ENCODE measurements at regions of chr9 and their contacts with region 1.

Region 1: DNA sequence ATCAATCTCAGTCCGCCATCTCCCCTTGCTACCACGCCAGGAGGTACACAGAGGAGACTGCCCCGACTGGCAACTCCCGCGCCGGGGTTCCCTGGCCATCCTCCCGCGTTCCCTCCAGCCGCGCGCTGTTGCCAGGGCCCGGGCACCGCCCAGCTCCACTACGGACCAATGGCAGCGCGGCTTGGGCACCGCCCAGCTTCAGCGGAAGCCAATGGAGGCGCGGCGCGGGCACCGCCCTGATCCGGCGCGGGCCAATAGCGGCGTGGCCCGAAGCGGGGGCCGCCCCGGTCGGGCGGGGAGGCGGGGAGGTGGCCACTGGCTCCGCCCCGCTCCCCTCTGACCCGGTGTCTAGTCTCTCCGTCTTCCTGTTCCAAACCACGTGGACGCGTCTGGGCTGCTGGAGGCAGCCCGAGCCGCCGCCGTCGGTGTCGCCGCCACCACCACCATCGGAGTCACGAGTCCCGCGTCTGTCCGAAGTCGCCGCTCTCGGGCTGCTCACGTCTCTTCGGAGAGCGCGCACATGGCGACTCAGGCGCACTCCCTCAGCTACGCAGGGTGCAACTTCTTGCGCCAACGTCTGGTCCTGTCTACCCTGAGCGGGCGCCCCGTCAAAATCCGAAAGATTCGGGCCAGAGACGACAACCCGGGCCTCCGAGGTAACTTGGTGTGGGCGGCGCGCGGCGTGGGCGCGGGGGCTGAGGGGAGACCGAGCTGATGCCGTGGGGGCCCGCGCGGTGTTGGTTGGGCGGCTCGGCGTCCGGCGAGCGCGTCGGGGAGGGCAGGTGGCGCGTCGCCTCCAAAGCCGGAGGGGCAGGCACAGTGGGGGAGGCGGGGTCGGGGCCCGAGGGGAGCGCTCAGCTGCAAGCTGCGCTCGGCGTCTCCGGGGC is at the start of gene RCL1:
- DNase-seq: peak; percentile 98
- H3K4me3 Mint-ChIP-seq: peak within 1 kb of the TSS; percentile 93
- H3K27ac Mint-ChIP-seq: peak within 1 kb of the TSS; percentile 86
- H3K4me1 Mint-ChIP-seq: peaks cover 49% of the 10 kb centered on the region
- H3K27me3 Mint-ChIP-seq: no peaks in the 10 kb centered on the region
- total RNA-seq, gene RCL1: 26.0 to 28.2 TPM

Region 2: DNA sequence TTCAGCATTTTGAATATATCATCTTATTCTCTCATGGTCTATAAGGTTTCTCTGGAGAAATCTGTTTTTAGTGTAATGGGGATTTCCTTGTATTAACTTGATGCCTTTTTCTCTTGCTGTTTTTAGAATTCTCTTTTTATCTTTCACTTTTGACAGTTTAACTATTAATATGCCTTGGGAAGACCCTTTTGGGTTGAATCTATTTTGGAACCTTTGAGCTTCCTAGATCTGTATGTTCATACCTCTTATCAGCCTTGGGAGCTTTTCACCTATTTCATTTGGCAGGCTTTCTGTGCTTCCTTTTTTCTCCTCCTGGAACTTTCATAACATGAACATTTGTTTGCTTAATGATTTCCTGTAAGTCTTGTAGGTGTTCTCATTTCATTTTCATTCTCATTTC is 22.1 kb after region 1 on chr9:
- CTCF ChIA-PET with region 1: interaction called, 6 read pairs
- POLR2A ChIA-PET with region 1: no interaction called
- intact Hi-C with region 1: loop called (anchors 2 kb)
- DNase-seq: no peak
- H3K4me3 Mint-ChIP-seq: peak overlapping the region; percentile 8
- H3K27ac Mint-ChIP-seq: peak overlapping the region; percentile 85
- H3K4me1 Mint-ChIP-seq: peaks cover 46% of the 10 kb centered on the region
- H3K27me3 Mint-ChIP-seq: no peaks in the 10 kb centered on the region